Adrenal gland (tissue), 19 donors: ENCODE measurements at regions of chr14 and their contacts with region 1.

Region 1: GRCh38 chr14:105700622-105701288 is 174.4 kb downstream of the TMEM121 start:
- DNase-seq: no peak
- H3K4me3 ChIP-seq: no peak overlapping the region
- H3K27ac ChIP-seq: no peak overlapping the region
- H3K4me1 ChIP-seq: no peaks in the 10 kb centered on the region
- H3K27me3 ChIP-seq: no peaks in the 10 kb centered on the region
- CTCF ChIP-seq: no peak
- POLR2A ChIP-seq: no peak

Region 2: GRCh38 chr14:105507247-105507646 is 193.5 kb before region 1 on chr14:
- intact Hi-C with region 1: no loop called
- DNase-seq: no peak
- H3K4me3 ChIP-seq: no peak overlapping the region
- H3K27ac ChIP-seq: no peak overlapping the region
- H3K4me1 ChIP-seq: no peaks in the 10 kb centered on the region
- H3K27me3 ChIP-seq: peaks cover 21% of the 10 kb centered on the region
- CTCF ChIP-seq: no peak
- POLR2A ChIP-seq: no peak

Region 3: GRCh38 chr14:105581551-105582341 is 119.0 kb before region 1 on chr14:
- intact Hi-C with region 1: loop called (anchors 2 to 5 kb)
- DNase-seq: peak in 1 of 7 donors; percentile 34
- H3K4me3 ChIP-seq: no peak overlapping the region
- H3K27ac ChIP-seq: no peak overlapping the region
- H3K4me1 ChIP-seq: no peaks in the 10 kb centered on the region
- H3K27me3 ChIP-seq: no peaks in the 10 kb centered on the region
- CTCF ChIP-seq: no peak
- POLR2A ChIP-seq: no peak

Region 4: DNA sequence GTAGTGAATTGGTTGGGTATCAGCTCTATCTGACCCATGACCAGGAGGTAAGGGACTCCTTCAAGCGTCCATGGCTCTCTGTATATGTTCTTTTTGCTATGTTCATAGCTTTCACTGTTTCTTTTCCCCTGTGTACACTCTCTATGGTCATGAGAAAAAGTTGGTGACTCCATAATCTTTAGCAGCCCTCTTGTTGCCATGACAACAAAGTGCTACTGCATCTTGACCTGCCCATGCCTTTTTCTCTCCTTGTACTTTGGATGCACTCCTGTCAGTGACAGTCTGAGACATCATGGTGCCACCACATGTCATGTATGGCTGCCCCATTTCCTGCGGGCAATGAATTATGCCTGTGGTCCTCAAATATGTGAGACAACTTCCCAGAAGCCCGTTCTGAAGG is 105.8 kb after region 1 on chr14:
- intact Hi-C with region 1: no loop called
- DNase-seq: no peak
- H3K4me3 ChIP-seq: no peak overlapping the region
- H3K27ac ChIP-seq: no peak overlapping the region
- H3K4me1 ChIP-seq: no peaks in the 10 kb centered on the region
- H3K27me3 ChIP-seq: no peaks in the 10 kb centered on the region
- CTCF ChIP-seq: no peak
- POLR2A ChIP-seq: no peak